Heart right ventricle (tissue), 16 donors: ENCODE measurements at regions of chr1 and their contacts with region 1.

Region 1: DNA sequence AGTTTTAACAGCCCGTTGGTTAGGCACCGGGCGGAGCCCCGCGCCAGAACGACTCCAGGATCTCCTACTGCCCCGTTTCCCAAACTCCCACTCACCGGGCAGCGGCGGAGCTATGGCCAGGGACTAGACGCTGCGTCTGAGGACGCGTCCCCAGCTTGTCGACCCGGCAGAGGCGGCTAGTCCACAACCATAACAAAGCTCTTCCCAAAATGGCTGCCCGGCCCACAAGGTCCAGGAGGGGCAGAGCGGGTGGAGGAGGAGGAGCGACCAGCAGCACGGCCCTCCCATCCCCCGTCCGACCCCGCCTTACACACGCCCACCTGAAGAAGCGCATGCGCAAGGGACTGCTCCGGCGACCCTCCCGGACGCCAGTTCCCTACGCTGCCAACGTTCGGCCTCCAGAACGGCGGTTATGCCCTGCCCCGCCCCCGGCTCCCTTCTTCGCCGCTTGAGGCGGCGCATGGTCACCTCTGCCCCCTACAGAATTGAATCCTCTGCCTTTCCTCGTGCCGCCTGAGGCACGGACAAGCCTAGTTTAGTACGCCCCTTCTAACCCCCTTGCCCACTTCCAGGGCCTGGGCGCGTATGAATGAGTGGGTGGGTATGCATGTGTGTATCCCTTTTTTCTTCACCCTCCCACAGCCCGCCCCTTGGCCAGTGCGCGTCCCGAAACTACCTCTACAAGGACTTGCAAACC is at the start of gene GPBP1L1:
- DNase-seq: peak; percentile 97 to 98
- ATAC-seq: peak; percentile 90 to 96 (median 92)
- H3K4me3 ChIP-seq: peak within 1 kb of the TSS; percentile 70 to 95 (median 84)
- H3K27ac ChIP-seq: peak within 1 kb of the TSS; percentile 88 to 98 (median 96)
- H3K4me1 ChIP-seq: peaks cover 0 to 56% (median 49%) of the 10 kb centered on the region in 9 donors
- H3K27me3 ChIP-seq: no peaks in the 10 kb centered on the region
- CTCF ChIP-seq: no peak
- total RNA-seq, gene GPBP1L1: 72.4 to 95.0 (median 84.0) TPM

Region 2: DNA sequence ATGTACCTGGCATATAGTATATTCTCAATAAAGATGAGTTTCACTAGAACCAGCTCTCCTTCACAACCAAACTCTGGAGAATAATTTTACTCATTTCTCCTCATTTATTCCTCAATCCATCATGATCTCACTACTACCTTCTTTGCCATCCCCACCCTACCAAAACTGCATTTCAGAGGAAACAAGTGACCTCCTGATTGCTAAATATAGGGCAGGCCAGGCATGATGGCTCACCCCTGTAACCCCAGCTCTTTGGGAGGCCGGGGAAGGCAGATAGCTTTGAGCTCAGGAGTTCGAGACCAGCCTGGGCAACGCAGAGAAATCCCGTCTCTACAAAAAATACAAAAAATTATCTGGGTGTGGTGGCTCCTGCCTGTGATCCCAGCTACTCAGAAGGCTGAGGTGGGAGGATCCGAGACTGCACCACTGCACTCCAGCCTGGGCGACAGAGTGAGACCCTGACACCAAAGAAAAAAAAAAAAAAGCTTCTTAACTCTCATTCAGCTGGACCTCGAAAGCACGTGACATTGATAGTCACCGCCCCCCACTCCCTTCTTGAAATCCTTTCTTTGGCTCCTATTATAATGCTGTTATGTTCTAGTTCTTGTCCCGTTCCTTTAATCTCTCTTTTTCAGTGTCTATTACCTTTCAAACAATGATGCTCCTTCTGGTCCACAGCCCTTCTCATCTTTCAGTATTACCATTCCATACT is 197.6 kb before region 1 on chr1:
- intact Hi-C with region 1: no loop called
- DNase-seq: no peak
- ATAC-seq: no peak
- H3K4me3 ChIP-seq: no peak overlapping the region
- H3K27ac ChIP-seq: no peak overlapping the region
- H3K4me1 ChIP-seq: peaks cover 0 to 29% (median 10%) of the 10 kb centered on the region in 9 donors
- H3K27me3 ChIP-seq: no peaks in the 10 kb centered on the region
- CTCF ChIP-seq: no peak

Region 3: GRCh38 chr1:45499415-45499769 is 187.1 kb before region 1 on chr1:
- intact Hi-C with region 1: loop called in 1 of 10 experiments (anchors 5 kb)
- DNase-seq: no peak
- ATAC-seq: peak in 1 of 8 donors; percentile 2
- H3K4me3 ChIP-seq: peak overlapping the region; percentile 26 to 74 (median 62)
- H3K27ac ChIP-seq: peak overlapping the region in 7 of 10 donors; percentile 2 to 81 (median 73)
- H3K4me1 ChIP-seq: peaks cover 0 to 32% (median 17%) of the 10 kb centered on the region in 9 donors
- H3K27me3 ChIP-seq: no peaks in the 10 kb centered on the region
- CTCF ChIP-seq: no peak

Region 4: DNA sequence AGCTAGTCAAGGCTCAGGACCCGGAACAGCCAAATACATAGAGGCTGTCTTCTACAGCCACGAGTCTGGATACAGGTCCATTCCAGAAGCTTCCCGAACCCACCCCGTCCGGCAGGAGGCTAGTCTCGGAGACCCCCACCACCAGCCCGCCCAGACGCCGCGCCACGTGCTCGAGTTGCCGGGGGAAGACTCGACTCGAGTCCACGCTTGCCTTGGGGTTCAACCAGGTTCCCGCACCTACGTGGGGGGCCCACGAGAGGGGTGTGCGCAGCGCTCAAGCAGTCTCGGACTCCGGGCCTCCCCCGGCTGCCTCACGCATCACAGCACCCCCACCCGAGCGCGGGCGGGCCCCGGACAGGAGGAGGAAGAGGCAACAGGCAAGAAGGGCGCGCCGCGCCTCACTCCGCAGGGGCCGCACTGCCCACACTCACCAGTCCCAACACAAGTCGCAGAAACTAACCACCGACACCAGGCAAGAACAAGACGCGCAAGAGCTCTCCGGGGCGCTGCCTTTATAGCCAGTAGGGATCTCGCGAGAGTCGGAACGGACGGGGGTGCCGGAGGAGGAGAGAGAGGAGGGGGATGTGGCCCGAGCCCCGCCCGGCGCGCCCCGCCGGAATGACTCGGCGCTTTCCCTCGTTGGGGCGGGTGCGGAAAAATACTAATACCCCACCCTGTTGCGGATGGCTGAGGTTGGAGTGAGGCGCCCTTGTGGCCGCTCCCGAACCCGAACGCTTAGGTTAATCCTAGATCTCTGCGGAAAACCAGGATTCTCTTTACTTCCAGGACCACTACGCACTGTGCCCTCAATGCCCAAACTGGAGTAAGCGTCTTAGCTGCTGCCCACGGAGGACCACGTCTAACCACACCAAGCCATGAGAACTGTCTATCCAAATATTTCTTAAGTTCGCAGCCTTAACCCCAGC is 164.8 kb before region 1 on chr1 and contains the start of gene PRDX1:
- intact Hi-C with region 1: loop called in 1 of 10 experiments (anchors 5 kb)
- DNase-seq: peak; percentile 98
- ATAC-seq: peak; percentile 96 to 98 (median 97)
- H3K4me3 ChIP-seq: peak within 1 kb of the TSS; percentile 58 to 96 (median 86)
- H3K27ac ChIP-seq: peak within 1 kb of the TSS; percentile 73 to 98 (median 93)
- H3K4me1 ChIP-seq: peaks cover 2 to 44% (median 25%) of the 10 kb centered on the region in 9 donors
- H3K27me3 ChIP-seq: peaks cover 0 to 7% (median 0%) of the 10 kb centered on the region in 7 donors
- CTCF ChIP-seq: peak in 4 of 9 donors; percentile 7 to 37 (median 28)
- total RNA-seq, gene PRDX1: 212 to 421 (median 289) TPM

Region 5: DNA sequence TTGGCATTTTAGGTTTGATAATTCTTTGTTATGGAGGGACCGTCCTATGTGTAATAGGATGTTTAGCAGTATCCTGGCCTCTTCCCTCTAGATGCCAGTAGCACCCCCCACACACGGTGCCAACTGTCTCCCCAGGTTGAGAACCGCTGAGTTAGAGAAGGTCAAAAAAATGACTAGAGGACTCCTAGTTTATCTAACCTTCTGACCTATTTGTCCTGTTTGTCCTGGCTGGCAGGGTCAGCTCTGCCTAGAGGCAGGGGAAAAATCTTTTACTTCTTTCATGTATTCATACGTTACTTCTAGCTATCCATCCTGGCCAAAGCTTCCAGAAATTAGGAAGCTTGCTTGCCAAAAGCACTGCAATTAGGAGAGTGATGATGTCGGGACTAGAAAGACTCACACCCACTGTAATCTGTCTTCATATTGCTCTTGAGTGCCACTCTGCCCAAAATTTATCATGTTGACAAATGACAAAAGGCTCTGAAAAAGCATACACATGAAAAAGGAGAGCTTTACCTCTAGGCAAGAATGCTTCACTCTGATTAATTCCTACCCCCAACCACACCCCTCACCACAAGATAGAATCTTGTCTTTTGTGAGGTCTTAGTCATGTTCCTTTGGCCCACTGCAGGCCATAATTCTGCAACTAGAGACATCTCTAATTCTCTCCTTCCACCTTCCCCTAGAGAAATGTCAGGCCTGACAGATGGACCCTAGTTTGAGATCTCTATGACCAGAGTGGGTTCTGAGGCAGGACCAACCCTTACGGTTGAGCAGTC is 150.3 kb before region 1 on chr1:
- intact Hi-C with region 1: no loop called
- DNase-seq: no peak
- ATAC-seq: no peak
- H3K4me3 ChIP-seq: no peak overlapping the region
- H3K27ac ChIP-seq: no peak overlapping the region
- H3K4me1 ChIP-seq: peaks cover 0 to 9% (median 0%) of the 10 kb centered on the region in 9 donors
- H3K27me3 ChIP-seq: no peaks in the 10 kb centered on the region
- CTCF ChIP-seq: no peak

Region 6: GRCh38 chr1:45583264-45583665 is 103.2 kb before region 1 on chr1:
- intact Hi-C with region 1: loop called in 3 of 10 experiments (anchors 1 to 10 kb)
- DNase-seq: peak; percentile 94 to 97
- ATAC-seq: peak; percentile 91 to 95 (median 93)
- H3K4me3 ChIP-seq: peak overlapping the region; percentile 80 to 100 (median 99)
- H3K27ac ChIP-seq: peak overlapping the region; percentile 86 to 96 (median 94)
- H3K4me1 ChIP-seq: peaks cover 6 to 39% (median 20%) of the 10 kb centered on the region in 9 donors
- H3K27me3 ChIP-seq: no peaks in the 10 kb centered on the region
- CTCF ChIP-seq: no peak

Region 7: DNA sequence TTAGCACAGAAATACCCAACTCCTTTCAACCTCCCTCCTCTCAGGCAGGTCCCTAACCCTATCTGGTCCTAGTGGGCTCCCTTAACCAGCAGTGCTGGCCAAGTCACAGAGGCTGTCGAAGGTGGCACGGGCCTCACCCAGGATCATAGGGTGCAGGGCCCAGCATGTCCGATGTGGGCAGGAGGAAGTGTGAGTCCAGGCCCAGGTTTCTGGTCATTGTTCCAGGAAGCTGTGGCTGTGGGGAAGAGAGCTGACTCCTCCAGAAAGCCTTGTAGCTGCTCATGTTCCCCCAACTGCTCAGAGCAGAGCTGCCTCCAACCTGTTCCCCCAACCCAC is 65.0 kb before region 1 on chr1:
- intact Hi-C with region 1: loop called in 1 of 10 experiments (anchors 10 kb)
- DNase-seq: peak in 1 of 2 donors; percentile 22
- ATAC-seq: peak in 7 of 8 donors; percentile 15 to 30 (median 21)
- H3K4me3 ChIP-seq: no peak overlapping the region
- H3K27ac ChIP-seq: peak overlapping the region in 9 of 10 donors; percentile 31 to 77 (median 63)
- H3K4me1 ChIP-seq: peaks cover 6 to 46% (median 25%) of the 10 kb centered on the region in 9 donors
- H3K27me3 ChIP-seq: no peaks in the 10 kb centered on the region
- CTCF ChIP-seq: no peak

Region 8: DNA sequence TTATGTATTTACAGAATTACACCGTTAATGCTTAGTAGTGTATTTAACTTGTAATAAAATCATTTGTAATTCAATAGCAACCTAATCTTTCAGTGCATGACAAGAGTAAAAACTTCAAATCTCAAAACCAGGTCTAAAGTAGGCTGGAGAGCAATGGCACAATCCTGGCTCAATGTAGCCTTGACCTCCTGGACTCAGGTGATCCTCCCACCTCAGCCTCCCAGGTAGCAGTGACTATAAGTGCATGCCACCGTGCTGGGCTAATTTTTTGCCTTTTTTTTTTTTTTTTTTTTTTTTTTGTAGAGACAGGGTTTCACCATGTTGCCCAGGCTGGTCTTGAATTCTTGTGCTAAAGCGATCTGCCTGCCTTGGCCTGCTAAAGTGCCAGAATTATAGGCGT is 52.7 kb after region 1 on chr1:
- intact Hi-C with region 1: no loop called
- DNase-seq: no peak
- ATAC-seq: no peak
- H3K4me3 ChIP-seq: no peak overlapping the region
- H3K27ac ChIP-seq: no peak overlapping the region
- H3K4me1 ChIP-seq: peaks cover 0 to 5% (median 0%) of the 10 kb centered on the region in 9 donors
- H3K27me3 ChIP-seq: no peaks in the 10 kb centered on the region
- CTCF ChIP-seq: no peak

Region 9: GRCh38 chr1:45750298-45751038 is 64.0 kb after region 1 on chr1 and contains the start of gene IPP:
- intact Hi-C with region 1: loop called in 4 of 10 experiments (anchors 2 to 5 kb)
- DNase-seq: peak; percentile 97 to 99
- ATAC-seq: peak; percentile 99 to 100 (median 100)
- H3K4me3 ChIP-seq: peak within 1 kb of the TSS; percentile 24 to 68 (median 62)
- H3K27ac ChIP-seq: peak within 1 kb of the TSS; percentile 87 to 97 (median 95)
- H3K4me1 ChIP-seq: peaks cover 0 to 20% (median 7%) of the 10 kb centered on the region in 9 donors
- H3K27me3 ChIP-seq: no peaks in the 10 kb centered on the region
- CTCF ChIP-seq: peak in 4 of 9 donors; percentile 38 to 52 (median 49)
- total RNA-seq, gene IPP: 13.4 to 30.0 (median 22.0) TPM

Region 10: DNA sequence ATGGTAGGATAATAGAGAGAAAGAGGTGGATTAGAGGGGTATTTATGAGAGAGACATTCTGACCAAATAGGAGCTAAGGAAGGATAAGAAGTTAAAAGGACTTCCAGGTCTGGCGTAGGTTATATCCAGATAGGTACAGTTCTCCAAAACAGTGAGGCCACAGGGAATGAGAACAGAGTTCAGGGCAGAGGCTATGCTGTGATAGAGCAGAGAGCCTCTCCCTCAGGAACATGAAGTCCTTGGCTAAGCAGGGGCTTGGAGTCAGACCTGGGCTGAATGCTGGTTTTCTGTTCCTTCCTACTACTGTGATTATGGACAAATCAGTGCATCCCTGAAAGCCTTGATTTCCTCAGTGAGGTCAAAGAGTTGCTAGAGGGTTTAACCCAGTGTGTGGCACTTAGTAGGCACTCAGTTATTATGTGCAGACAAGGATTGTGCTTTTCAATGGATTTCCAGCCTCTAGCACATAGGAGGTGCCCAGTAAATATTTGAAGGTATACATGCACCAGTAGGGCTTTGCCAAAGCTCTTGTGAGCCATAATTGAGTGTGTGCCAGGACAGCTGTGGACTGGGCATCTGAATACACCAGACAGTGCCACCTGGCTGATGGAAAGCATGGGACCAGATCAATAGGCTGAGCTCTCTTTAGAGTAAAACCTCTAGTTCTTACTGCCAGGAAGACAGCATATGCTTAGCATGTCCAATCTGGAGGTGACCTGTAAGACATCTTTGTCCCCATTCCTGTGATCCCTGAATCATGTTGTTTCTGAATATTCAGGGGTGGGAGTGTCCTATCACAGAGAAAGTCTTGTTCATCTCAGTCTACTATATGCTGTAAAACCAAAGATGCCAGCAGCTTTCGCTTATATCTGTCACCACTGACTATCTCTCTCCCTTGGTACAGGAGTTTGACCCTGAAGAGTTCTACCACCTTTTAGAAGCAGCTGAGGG is 334.9 kb after region 1 on chr1:
- intact Hi-C with region 1: loop called in 1 of 10 experiments (anchors 10 kb)
- DNase-seq: no peak
- ATAC-seq: peak in 2 of 8 donors; percentile 33 to 71
- H3K4me3 ChIP-seq: no peak overlapping the region
- H3K27ac ChIP-seq: peak overlapping the region in 5 of 10 donors; percentile 3 to 43 (median 18)
- H3K4me1 ChIP-seq: peaks cover 0 to 48% (median 23%) of the 10 kb centered on the region in 9 donors
- H3K27me3 ChIP-seq: no peaks in the 10 kb centered on the region
- CTCF ChIP-seq: peak in 2 of 9 donors; percentile 16 to 30